HepG2 (cell line): ENCODE measurements at regions of chr20 and their contacts with region 1.

Region 1: GRCh38 chr20:16476032-16476431 is 97.2 kb downstream of the KIF16B start:
- DNase-seq: peak; percentile 76
- ATAC-seq: peak; percentile 71
- H3K4me3 ChIP-seq: peak overlapping the region in 2 of 3 experiments; percentile 5 to 6; a peak in 2 of 6 replicates
- H3K27ac ChIP-seq: peak overlapping the region; percentile 71
- H3K4me1 ChIP-seq: peaks cover 58% of the 10 kb centered on the region
- H3K27me3 ChIP-seq: no peaks in the 10 kb centered on the region
- CTCF ChIP-seq: peak; percentile 83
- EP300 ChIP-seq: no peak
- POLR2A ChIP-seq: no peak
- RAD21 ChIP-seq: peak; percentile 83

Region 2: GRCh38 chr20:14986026-14986655 is 1489.9 kb before region 1 on chr20:
- CTCF ChIA-PET with region 1: no interaction called
- POLR2A ChIA-PET with region 1: no interaction called
- in situ Hi-C with region 1: no loop called
- intact Hi-C with region 1: loop called (anchors 10 kb)
- DNase-seq: peak; percentile 99
- ATAC-seq: peak; percentile 63
- H3K4me3 ChIP-seq: peak overlapping the region in 1 of 3 experiments; percentile 32; a peak in 1 of 6 replicates
- H3K27ac ChIP-seq: peak overlapping the region; percentile 95
- H3K4me1 ChIP-seq: peaks cover 80% of the 10 kb centered on the region
- H3K27me3 ChIP-seq: no peaks in the 10 kb centered on the region
- CTCF ChIP-seq: no peak
- EP300 ChIP-seq: peak; percentile 59 to 94; a peak in 3 of 4 replicates
- POLR2A ChIP-seq: peak in 1 of 2 experiments; percentile 22; a peak in 1 of 4 replicates
- RAD21 ChIP-seq: no peak

Region 3: GRCh38 chr20:15716256-15716655 is 759.8 kb before region 1 on chr20:
- CTCF ChIA-PET with region 1: no interaction called
- POLR2A ChIA-PET with region 1: no interaction called
- in situ Hi-C with region 1: loop called (anchors 10 kb)
- intact Hi-C with region 1: no loop called
- DNase-seq: no peak
- ATAC-seq: no peak
- H3K4me3 ChIP-seq: no peak overlapping the region
- H3K27ac ChIP-seq: no peak overlapping the region
- H3K4me1 ChIP-seq: no peaks in the 10 kb centered on the region
- H3K27me3 ChIP-seq: no peaks in the 10 kb centered on the region
- CTCF ChIP-seq: no peak
- EP300 ChIP-seq: no peak
- POLR2A ChIP-seq: no peak
- RAD21 ChIP-seq: no peak

Region 4: DNA sequence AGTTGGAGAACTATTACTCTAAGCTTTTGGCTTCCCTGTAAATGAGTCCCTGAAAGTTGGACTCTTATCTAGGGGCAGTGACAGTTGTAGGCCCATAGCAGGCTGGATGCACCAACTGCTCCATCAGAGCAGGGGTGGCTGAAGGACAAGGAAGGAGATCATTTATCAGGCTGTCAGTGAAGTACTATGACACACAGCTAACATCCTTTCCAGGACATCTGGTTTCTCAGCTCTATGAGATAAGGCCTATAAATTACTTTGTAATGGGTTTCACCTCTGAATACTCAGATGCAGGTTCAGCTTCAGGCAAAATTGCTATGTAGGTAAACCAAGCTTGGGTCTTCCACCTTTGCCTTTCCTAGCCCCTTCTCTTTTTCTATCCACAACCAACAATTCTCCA is 371.2 kb before region 1 on chr20:
- CTCF ChIA-PET with region 1: no interaction called
- POLR2A ChIA-PET with region 1: no interaction called
- in situ Hi-C with region 1: no loop called
- intact Hi-C with region 1: loop called (anchors 5 kb)
- DNase-seq: no peak
- ATAC-seq: no peak
- H3K4me3 ChIP-seq: no peak overlapping the region
- H3K27ac ChIP-seq: no peak overlapping the region
- H3K4me1 ChIP-seq: peaks cover 32% of the 10 kb centered on the region
- H3K27me3 ChIP-seq: no peaks in the 10 kb centered on the region
- CTCF ChIP-seq: no peak
- EP300 ChIP-seq: no peak
- POLR2A ChIP-seq: no peak
- RAD21 ChIP-seq: no peak

Region 5: DNA sequence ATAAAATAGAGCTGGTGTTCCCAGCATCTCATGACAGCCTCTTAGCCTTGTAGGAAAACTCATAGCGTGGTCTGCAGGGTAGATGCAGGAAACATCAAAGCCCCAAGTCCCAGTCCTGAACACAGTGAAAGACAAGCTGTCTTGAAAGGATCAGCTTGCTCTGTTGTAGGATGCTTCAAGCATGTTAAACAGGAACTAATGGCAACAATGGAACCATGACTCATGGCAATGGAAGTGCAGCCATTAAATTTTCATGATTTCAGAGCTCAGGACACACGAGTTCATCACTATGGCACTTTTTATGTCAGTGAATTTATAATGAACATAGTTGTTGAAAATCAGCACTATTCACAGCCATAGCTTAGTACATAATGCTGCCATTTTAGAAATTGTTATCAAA is 270.5 kb before region 1 on chr20:
- CTCF ChIA-PET with region 1: no interaction called
- POLR2A ChIA-PET with region 1: no interaction called
- in situ Hi-C with region 1: no loop called
- intact Hi-C with region 1: no loop called
- DNase-seq: no peak
- ATAC-seq: no peak
- H3K4me3 ChIP-seq: no peak overlapping the region
- H3K27ac ChIP-seq: no peak overlapping the region
- H3K4me1 ChIP-seq: no peaks in the 10 kb centered on the region
- H3K27me3 ChIP-seq: no peaks in the 10 kb centered on the region; a peak in 1 of 5 replicates
- CTCF ChIP-seq: no peak
- EP300 ChIP-seq: no peak
- POLR2A ChIP-seq: no peak
- RAD21 ChIP-seq: no peak

Region 6: DNA sequence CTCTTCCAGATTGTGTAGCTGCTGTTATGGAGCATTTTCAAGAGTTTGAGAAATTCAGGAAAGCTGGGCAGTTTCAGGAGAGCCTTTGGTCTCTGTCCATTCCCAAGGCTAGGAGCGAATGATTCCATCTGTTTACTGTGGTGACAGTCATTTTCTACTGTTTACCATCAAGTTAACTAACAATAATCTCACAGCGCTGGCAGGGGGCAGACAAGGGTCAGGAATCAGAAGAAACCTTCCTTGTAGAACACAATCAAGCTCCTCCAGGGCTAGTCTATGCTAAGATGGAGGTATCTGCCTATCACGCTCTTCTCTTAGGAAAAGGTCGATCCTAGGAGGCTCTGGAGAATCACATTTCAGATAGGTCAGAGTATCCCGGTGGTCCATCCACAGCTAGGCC is 196.7 kb before region 1 on chr20:
- CTCF ChIA-PET with region 1: interaction called, 4 read pairs
- POLR2A ChIA-PET with region 1: no interaction called
- in situ Hi-C with region 1: no loop called
- intact Hi-C with region 1: loop called (anchors 1 kb)
- DNase-seq: peak; percentile 43
- ATAC-seq: peak; percentile 88
- H3K4me3 ChIP-seq: no peak overlapping the region
- H3K27ac ChIP-seq: no peak overlapping the region
- H3K4me1 ChIP-seq: peaks cover 21% of the 10 kb centered on the region
- H3K27me3 ChIP-seq: no peaks in the 10 kb centered on the region
- CTCF ChIP-seq: peak; percentile 57
- EP300 ChIP-seq: no peak
- POLR2A ChIP-seq: no peak
- RAD21 ChIP-seq: no peak

Region 7: DNA sequence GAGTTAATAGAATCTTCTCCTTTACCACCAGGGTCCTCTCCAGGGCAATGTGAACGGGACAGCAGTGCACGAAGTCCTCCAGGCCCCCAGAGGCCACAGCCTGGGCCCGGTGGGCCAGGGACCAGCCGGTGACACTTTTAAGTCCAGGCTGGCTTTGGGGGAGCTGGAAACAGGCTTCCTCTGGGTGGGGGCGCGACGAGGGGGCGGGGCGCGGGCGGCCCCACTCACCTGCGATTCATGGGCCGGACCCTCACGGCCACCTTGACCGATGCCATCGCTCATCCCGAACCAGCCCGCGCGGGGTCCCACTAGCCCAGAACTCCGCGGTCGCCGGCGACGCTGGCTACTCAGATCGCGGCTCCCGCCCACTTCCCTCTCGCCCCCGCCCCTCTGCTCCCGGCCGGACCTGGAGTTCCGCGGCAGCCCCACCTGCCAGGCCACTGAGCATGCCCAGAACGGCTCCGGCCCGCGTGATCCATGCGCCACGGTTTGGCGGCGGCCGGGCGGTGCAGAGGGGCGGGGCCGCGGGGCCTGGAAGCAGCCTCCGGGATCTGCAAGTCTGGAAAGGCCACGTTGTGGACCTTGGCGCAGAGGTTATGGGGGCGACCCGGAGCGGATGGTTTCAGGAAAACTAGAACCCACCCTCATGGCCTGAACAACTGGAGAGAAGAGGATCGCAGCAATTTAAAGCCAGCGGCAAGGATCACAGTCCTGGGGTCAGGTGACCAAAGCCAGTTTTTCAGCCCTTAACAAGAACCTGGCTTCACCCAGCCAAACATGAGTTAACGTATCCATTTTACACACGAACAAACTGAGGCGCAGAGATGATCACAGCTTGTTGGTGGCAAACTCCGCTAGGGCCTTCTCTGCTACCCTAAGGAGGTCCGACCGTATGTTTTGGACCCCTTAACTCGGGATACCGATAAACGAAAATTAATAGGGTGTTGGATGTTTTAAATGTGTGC is 97.3 kb after region 1 on chr20 and contains the start of gene KIF16B:
- CTCF ChIA-PET with region 1: no interaction called
- POLR2A ChIA-PET with region 1: no interaction called
- in situ Hi-C with region 1: no loop called
- intact Hi-C with region 1: loop called (anchors 2 kb)
- DNase-seq: peak; percentile 94
- ATAC-seq: peak; percentile 87
- H3K4me3 ChIP-seq: peak within 1 kb of the TSS; percentile 70 to 92 (median 85)
- H3K27ac ChIP-seq: peak within 1 kb of the TSS; percentile 77
- H3K4me1 ChIP-seq: peaks cover 62% of the 10 kb centered on the region
- H3K27me3 ChIP-seq: no peaks in the 10 kb centered on the region; a peak in 1 of 5 replicates
- CTCF ChIP-seq: peak; percentile 61
- EP300 ChIP-seq: peak; percentile 65 to 67; a peak in 2 of 4 replicates
- POLR2A ChIP-seq: peak; percentile 84 to 91
- RAD21 ChIP-seq: peak; percentile 81
- total RNA-seq, gene KIF16B: 18.0 and 23.3 TPM in 2 replicates